ENCODE measurements at regions of chr22 and their contacts with region 1.

Region 1: GRCh38 chr22:34122042-34122441 is 201.8 kb upstream of the LARGE1 start:
- DNase-seq: no peak
- H3K4me3 ChIP-seq: no peak overlapping the region
- H3K4me3 Mint-ChIP-seq: no peak overlapping the region
- H3K27ac Mint-ChIP-seq: no peak overlapping the region
- H3K4me1 ChIP-seq: no peaks in the 10 kb centered on the region
- H3K4me1 Mint-ChIP-seq: no peaks in the 10 kb centered on the region
- H3K27me3 ChIP-seq: no peaks in the 10 kb centered on the region
- H3K27me3 Mint-ChIP-seq: no peaks in the 10 kb centered on the region
- CTCF ChIP-seq: no peak

Region 2: GRCh38 chr22:34111210-34111824 is 10.7 kb before region 1 on chr22:
- CTCF ChIA-PET with region 1: no interaction called
- POLR2A ChIA-PET with region 1: no interaction called
- intact Hi-C with region 1: no loop called
- DNase-seq: peak in 1 of 2 experiments; percentile 26
- H3K4me3 ChIP-seq: no peak overlapping the region
- H3K4me3 Mint-ChIP-seq: no peak overlapping the region
- H3K27ac Mint-ChIP-seq: no peak overlapping the region
- H3K4me1 ChIP-seq: no peaks in the 10 kb centered on the region
- H3K4me1 Mint-ChIP-seq: no peaks in the 10 kb centered on the region
- H3K27me3 ChIP-seq: no peaks in the 10 kb centered on the region
- H3K27me3 Mint-ChIP-seq: no peaks in the 10 kb centered on the region
- CTCF ChIP-seq: peak; percentile 72 to 74

Region 3: GRCh38 chr22:34914846-34915245 is 792.8 kb after region 1 on chr22:
- CTCF ChIA-PET with region 1: no interaction called
- POLR2A ChIA-PET with region 1: no interaction called
- intact Hi-C with region 1: loop called (anchors 5 kb)
- DNase-seq: no peak
- H3K4me3 ChIP-seq: no peak overlapping the region
- H3K4me3 Mint-ChIP-seq: no peak overlapping the region
- H3K27ac Mint-ChIP-seq: no peak overlapping the region
- H3K4me1 ChIP-seq: no peaks in the 10 kb centered on the region
- H3K4me1 Mint-ChIP-seq: no peaks in the 10 kb centered on the region
- H3K27me3 ChIP-seq: no peaks in the 10 kb centered on the region
- H3K27me3 Mint-ChIP-seq: peaks cover 11% of the 10 kb centered on the region
- CTCF ChIP-seq: no peak